Activated T-helper 2 cell treated with anti-CD3 and anti-CD28 coated beads, Interferon-gamma antibody, Interleukin-2, Interleukin-4, amounts not matched to agents 10 μg/mL and 5 μg/mL and 100 μg/mL, durations not matched to agents 14 hours and 24 hours and 36 hours (primary cell): ENCODE measurements at regions of chr3 and their contacts with region 1.

Region 1: DNA sequence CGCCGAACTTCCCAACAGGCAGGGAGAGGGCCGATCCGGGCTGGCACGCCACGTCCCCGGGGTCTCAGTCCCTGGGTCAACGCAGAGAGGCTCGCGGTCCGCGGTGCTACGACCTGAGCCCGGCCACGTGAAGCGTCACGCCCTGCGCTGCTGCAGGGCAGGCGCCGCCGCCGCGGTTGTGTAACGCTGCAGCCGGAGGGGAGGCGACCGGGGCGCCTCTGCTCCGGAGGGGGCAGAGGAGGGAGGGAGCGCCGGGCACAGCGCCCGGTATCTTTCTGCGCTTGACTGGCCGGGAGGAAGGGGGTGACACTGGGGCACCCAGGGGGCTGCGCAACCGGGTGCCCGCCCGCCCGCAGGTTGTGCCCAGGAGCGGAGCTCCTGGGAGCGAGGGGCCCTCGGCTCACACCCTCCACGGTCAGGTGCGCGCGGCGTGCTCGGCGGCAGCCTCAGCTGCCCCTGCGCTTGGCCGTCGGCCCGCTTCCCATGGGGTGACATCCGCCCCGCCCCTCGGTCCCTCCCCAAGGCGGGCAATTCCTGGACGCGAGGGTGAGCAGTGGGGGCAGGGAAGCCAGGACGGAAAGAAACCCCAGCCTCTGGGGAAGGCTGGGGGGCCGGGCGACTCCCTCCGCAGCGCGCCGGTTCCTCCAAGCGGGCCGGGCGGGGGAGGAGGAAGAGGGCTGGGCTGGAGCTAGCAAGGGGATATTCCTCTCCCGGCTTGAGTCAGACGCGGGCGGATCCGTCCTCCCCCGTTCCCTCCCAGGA is 852 bp upstream of the BHLHE40 start:
- DNase-seq: peak; percentile 84
- H3K4me3 Mint-ChIP-seq: peak overlapping the region; percentile 87
- H3K27ac Mint-ChIP-seq: peak overlapping the region; percentile 100
- H3K4me1 Mint-ChIP-seq: peaks cover 34% of the 10 kb centered on the region
- H3K27me3 Mint-ChIP-seq: no peaks in the 10 kb centered on the region

Region 2: DNA sequence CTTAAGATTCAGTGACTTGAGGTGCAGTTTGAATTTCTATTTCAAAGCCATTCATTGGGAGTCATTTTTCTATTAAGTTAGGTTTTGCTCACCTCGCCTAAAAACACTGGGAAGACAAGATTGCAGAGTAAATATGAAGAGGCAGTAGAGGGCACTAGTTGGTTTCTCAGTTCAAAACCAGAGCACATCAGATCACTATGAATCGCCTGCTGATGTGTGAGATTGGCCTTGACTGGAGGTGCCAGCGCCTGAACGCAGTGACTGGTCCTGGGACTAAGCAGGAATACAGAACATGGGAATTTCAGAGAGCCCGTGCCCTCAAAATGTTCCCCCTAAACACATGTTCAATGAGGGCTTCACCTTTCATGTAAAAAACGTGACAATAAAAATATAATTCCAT is 256.3 kb before region 1 on chr3:
- intact Hi-C with region 1: loop called (anchors 1 kb)
- DNase-seq: peak; percentile 23
- H3K4me3 Mint-ChIP-seq: no peak overlapping the region
- H3K27ac Mint-ChIP-seq: peak overlapping the region; percentile 63
- H3K4me1 Mint-ChIP-seq: peaks cover 53% of the 10 kb centered on the region
- H3K27me3 Mint-ChIP-seq: no peaks in the 10 kb centered on the region

Region 3: GRCh38 chr3:4821975-4822374 is 156.4 kb before region 1 on chr3:
- intact Hi-C with region 1: loop called (anchors 1 kb)
- DNase-seq: peak; percentile 77
- H3K4me3 Mint-ChIP-seq: peak overlapping the region; percentile 20
- H3K27ac Mint-ChIP-seq: peak overlapping the region; percentile 93
- H3K4me1 Mint-ChIP-seq: peaks cover 84% of the 10 kb centered on the region
- H3K27me3 Mint-ChIP-seq: no peaks in the 10 kb centered on the region

Region 4: DNA sequence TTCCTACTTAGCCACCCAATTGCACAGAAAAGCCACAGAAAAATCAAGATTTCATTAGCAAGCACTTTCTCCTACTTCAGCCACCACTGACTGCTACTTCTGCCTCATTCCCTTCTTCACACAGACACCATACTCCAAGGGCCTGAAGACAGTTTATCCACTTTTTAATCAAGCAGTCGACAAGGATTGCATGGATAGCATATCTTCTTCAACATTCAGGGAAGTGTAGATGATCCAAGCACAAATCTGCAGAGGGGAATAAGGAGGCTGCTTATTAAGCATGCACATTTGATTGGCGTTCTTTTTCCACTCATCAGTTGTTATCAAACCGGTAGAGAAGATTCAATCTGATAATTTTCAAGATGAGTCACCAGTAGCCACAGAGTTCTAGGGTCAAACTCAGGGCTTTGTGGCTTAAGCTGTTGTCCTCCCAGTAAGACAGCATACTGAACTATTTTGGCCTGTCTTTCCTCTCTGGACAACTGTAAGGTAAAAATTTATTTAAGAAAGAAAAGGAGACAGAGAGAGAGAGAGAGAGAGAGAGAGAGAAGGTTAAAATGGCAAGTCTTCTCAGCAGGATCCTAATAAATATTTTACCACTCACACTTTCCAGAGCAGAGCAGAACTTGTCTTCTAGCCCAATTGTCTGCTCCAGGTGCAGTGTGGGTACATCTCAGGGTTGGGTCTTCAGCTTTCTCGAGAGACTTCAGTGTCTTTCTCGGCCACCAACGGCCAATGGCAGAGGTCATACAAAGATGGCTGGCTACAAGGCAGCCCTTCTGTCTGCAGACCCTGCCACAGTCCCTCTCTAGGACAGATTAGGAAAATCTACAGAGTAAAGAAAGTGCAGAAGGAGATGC is 79.7 kb before region 1 on chr3:
- intact Hi-C with region 1: loop called (anchors 1 kb)
- DNase-seq: no peak
- H3K4me3 Mint-ChIP-seq: peak overlapping the region; percentile 26
- H3K27ac Mint-ChIP-seq: peak overlapping the region; percentile 94
- H3K4me1 Mint-ChIP-seq: peaks cover 81% of the 10 kb centered on the region
- H3K27me3 Mint-ChIP-seq: no peaks in the 10 kb centered on the region

Region 5: DNA sequence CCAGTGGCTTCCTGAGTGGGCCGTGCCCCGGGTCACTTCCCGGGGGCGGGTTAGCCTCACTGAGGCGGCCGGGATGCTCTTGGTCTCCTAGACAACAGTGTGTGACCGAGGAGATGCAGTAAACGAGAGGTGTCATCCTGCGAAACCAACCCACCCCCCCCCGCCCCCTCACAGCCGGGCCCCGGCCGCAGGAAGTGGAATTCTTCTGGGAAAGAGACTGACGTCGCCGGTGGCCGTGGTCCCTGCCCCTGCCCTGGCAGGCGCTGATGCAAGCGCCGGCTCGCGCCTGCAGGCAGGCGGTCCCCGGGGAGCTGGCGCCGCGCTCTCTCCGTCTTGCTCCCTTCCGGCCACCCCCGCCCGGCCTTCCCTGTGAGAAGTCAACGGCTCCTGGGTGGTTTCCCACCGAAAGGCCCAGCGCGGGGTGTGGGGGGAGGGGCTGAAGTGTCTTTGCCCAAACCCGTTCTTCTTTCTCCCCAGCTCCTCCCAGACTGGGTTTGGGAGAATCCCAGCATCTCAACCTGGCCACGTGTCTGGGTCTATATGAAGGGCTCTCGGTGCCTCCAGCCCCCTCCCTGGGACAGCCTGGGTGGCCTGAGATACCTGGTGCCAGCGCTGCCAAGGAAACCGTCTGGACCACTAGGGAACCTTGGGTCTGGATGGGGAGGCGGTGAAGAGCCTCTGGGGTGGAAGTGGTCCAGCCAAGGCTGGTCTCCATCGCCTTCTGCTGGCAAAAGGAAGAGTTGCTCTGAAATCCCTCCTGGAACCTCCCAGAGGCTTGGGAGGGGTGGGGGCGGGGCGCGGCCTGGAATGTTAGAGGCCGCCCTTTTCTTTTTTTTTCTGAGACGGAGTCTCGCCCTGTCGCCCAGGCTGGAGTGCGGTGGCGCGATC is 48.2 kb after region 1 on chr3:
- intact Hi-C with region 1: loop called (anchors 1 kb)
- DNase-seq: peak; percentile 41
- H3K4me3 Mint-ChIP-seq: peak overlapping the region; percentile 77
- H3K27ac Mint-ChIP-seq: peak overlapping the region; percentile 90
- H3K4me1 Mint-ChIP-seq: peaks cover 57% of the 10 kb centered on the region
- H3K27me3 Mint-ChIP-seq: no peaks in the 10 kb centered on the region

Region 6: DNA sequence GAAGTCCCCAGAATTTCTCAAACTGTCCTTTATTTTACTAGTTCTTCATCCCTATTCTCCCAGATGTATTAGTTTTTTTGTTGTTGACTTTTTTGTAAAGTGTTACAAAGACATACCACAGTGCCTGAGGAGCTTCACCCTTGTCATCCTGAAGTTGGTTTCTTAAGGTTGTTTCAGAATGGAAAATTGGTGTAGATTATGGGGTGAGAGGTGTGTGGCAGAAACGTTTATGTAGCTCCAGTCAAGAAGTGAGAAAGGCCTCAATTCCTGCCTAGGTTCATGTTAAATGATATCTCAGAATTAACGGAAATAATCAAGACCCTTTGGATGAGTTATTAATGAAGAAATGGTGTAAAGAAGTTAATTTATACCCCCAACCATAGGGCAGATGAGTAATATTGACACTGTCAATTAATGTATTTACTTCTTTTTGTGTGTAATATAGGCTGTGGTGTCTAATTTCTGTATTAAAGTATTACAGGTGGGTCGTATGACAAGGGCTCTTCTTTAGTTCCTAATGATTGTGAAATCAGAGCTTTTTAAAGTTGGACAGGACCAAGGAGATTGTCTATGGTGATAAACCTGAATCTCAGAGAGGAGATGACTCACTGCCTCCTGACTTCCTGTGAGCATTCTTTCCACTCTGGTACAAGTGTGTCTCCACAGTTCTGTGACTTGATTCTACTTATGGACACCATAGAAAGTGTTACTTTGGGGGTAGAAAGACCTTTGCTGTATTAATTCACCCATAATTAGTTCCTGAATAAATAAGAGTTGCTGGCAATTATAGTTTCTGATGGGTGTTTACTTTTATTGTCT is 216.2 kb after region 1 on chr3:
- intact Hi-C with region 1: loop called (anchors 2 kb)
- DNase-seq: peak; percentile 47
- H3K4me3 Mint-ChIP-seq: peak overlapping the region; percentile 62
- H3K27ac Mint-ChIP-seq: peak overlapping the region; percentile 94
- H3K4me1 Mint-ChIP-seq: peaks cover 85% of the 10 kb centered on the region
- H3K27me3 Mint-ChIP-seq: no peaks in the 10 kb centered on the region